CD8-positive, alpha-beta T cell (primary cell): ENCODE measurements at regions of chr12 and their contacts with region 1.

Region 1: DNA sequence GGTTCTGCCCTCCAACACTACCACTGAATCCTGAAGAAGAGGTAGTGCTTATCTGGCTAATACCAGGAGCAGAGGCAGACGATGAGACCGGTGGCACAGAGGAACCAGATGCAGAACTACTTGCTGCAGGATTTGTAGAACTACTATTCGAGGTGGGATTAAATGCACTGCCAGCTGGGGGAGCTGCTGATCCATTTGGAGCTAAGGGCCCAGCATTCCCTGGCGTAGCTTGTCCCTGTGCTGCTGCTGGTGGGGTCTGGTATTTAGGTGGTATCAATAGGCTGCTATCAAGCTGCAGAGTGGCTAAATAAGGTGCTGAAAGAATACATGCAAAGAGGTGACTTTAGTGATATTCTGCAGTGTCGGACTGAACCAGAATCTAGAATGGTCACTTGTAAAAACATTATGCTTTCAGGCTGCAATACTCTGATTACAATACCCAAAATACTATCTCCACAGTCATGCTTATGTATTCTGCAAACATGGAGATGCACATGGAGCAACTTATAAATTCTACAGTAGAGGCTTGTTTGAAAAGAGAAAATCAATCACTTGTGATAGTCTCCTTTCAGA is 294.2 kb downstream of the MED13L start:
- DNase-seq: no peak
- ATAC-seq: no peak
- H3K4me3 ChIP-seq: no peak overlapping the region
- H3K4me3 Mint-ChIP-seq: no peak overlapping the region
- H3K27ac ChIP-seq: no peak overlapping the region
- H3K27ac Mint-ChIP-seq: peak overlapping the region; percentile 37
- H3K4me1 ChIP-seq: no peaks in the 10 kb centered on the region
- H3K4me1 Mint-ChIP-seq: peaks cover 3% of the 10 kb centered on the region
- H3K27me3 ChIP-seq: no peaks in the 10 kb centered on the region
- H3K27me3 Mint-ChIP-seq: no peaks in the 10 kb centered on the region
- CTCF ChIP-seq: no peak

Region 2: DNA sequence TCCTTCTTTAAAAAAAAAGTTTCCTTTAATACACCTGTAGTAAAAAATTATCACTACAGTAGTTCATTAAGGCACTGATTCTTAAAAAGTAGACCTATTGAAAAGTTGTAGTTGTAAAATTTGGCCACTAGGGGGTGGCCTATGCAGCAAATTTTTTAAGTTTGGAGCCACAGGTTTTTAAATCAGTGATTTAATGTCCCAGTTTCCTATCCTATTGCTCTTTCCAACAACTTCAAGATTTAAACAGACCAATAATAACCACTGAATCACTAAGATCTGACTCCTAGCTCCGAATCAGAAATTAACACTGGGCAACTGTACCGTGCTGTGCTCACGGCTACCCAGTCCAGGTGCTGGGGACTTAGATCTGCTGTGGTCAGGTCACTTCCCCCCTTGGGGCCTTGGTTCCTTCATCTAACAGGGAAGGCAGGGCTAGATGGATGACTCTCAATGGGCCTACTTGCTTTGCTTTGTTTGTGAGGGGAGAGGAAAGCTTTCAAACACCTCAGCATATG is 14.9 kb after region 1 on chr12:
- CTCF ChIA-PET with region 1: interaction called, 21 read pairs
- POLR2A ChIA-PET with region 1: no interaction called
- intact Hi-C with region 1: no loop called
- DNase-seq: peak in 3 of 9 experiments; percentile 20 to 63 (median 55)
- ATAC-seq: peak; percentile 58
- H3K4me3 ChIP-seq: no peak overlapping the region
- H3K4me3 Mint-ChIP-seq: no peak overlapping the region
- H3K27ac ChIP-seq: no peak overlapping the region
- H3K27ac Mint-ChIP-seq: peak overlapping the region; percentile 75
- H3K4me1 ChIP-seq: no peaks in the 10 kb centered on the region
- H3K4me1 Mint-ChIP-seq: peaks cover 14% of the 10 kb centered on the region
- H3K27me3 ChIP-seq: no peaks in the 10 kb centered on the region
- H3K27me3 Mint-ChIP-seq: no peaks in the 10 kb centered on the region
- CTCF ChIP-seq: peak; percentile 97